Panc1 (cell line): ENCODE measurements at regions of chr2 and their contacts with region 1.

Region 1: DNA sequence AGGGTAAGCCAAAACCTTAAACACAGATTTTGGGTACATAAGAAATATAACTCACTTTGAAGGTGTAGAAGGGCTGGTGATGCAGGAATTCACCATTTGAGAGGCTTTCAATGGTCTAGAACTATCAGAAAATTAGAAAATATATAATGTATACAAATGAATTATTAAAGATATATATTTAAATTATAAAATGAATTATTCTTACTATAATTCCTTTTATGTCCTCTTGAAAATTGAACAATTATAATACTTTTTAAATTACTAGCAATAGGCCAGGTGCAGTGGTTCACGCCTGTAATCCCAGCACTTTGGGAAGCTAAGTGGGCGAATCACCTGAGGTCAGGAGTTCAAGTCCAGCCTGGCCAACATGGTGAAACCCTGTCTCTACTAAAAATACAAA is 60.7 kb downstream of the VIL1 start:
- DNase-seq: no peak
- ATAC-seq: no peak
- H3K4me3 ChIP-seq: no peak overlapping the region
- H3K27ac ChIP-seq: no peak overlapping the region
- H3K4me1 ChIP-seq: no peaks in the 10 kb centered on the region
- H3K27me3 ChIP-seq: no peaks in the 10 kb centered on the region
- CTCF ChIP-seq: no peak

Region 2: GRCh38 chr2:218536804-218537494 is 57.4 kb after region 1 on chr2:
- CTCF ChIA-PET with region 1: no interaction called
- POLR2A ChIA-PET with region 1: interaction called, 15 read pairs
- in situ Hi-C with region 1: no loop called
- intact Hi-C with region 1: no loop called
- DNase-seq: no peak
- ATAC-seq: no peak
- H3K4me3 ChIP-seq: no peak overlapping the region
- H3K27ac ChIP-seq: no peak overlapping the region
- H3K4me1 ChIP-seq: no peaks in the 10 kb centered on the region
- H3K27me3 ChIP-seq: no peaks in the 10 kb centered on the region
- CTCF ChIP-seq: no peak

Region 3: DNA sequence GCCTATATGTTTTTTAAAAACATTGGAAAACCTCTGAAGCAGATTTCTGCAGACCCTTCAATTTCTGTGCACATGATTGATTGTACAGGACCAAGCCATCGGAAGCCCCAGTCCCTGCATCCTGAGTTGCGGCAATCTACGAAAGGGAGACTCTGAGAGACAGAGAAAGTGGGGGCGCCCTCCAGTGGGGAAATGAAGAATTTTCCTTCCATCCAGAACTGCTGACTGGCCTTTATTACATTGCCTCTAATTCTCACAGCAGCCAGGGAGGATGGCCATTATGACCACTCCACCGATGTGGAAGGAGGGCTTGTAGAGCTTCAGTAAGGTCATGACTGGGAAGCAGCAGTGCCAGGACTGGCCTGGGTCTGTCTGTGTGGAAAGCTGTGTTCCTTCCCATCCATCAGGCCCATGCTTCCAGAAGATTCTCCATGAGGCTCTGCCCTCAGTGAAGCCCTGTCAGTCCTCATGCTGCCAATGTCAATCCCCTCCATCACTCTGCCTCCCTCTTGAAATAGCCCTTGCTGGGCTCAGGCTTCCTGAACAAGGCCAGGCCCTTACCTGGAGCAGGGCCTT is 872.9 kb after region 1 on chr2:
- CTCF ChIA-PET with region 1: no interaction called
- POLR2A ChIA-PET with region 1: no interaction called
- in situ Hi-C with region 1: no loop called
- intact Hi-C with region 1: no loop called
- DNase-seq: peak; percentile 30
- ATAC-seq: peak; percentile 90
- H3K4me3 ChIP-seq: no peak overlapping the region
- H3K27ac ChIP-seq: no peak overlapping the region
- H3K4me1 ChIP-seq: no peaks in the 10 kb centered on the region
- H3K27me3 ChIP-seq: no peaks in the 10 kb centered on the region
- CTCF ChIP-seq: peak; percentile 89